ENCODE measurements at regions of chr11 and their contacts with region 1.

Region 1: GRCh38 chr11:57527056-57527631 is 3.4 kb downstream of the TIMM10 start:
- DNase-seq: peak; percentile 60 to 88 (median 78)
- H3K4me3 ChIP-seq: no peak overlapping the region
- H3K27ac ChIP-seq: no peak overlapping the region
- H3K4me1 ChIP-seq: peaks cover 8 to 18% of the 10 kb centered on the region in 2 donors
- H3K27me3 ChIP-seq: no peaks in the 10 kb centered on the region
- CTCF ChIP-seq: peak; percentile 89 to 96 (median 92)
- POLR2A ChIP-seq: no peak

Region 2: GRCh38 chr11:57345555-57346211 is 181.5 kb before region 1 on chr11:
- intact Hi-C with region 1: loop called in 1 of 2 experiments (anchors 10 kb)
- DNase-seq: peak; percentile 67 to 91 (median 80)
- H3K4me3 ChIP-seq: no peak overlapping the region
- H3K27ac ChIP-seq: no peak overlapping the region
- H3K4me1 ChIP-seq: no peaks in the 10 kb centered on the region
- H3K27me3 ChIP-seq: no peaks in the 10 kb centered on the region
- CTCF ChIP-seq: peak; percentile 50 to 85 (median 74)
- POLR2A ChIP-seq: no peak

Region 3: DNA sequence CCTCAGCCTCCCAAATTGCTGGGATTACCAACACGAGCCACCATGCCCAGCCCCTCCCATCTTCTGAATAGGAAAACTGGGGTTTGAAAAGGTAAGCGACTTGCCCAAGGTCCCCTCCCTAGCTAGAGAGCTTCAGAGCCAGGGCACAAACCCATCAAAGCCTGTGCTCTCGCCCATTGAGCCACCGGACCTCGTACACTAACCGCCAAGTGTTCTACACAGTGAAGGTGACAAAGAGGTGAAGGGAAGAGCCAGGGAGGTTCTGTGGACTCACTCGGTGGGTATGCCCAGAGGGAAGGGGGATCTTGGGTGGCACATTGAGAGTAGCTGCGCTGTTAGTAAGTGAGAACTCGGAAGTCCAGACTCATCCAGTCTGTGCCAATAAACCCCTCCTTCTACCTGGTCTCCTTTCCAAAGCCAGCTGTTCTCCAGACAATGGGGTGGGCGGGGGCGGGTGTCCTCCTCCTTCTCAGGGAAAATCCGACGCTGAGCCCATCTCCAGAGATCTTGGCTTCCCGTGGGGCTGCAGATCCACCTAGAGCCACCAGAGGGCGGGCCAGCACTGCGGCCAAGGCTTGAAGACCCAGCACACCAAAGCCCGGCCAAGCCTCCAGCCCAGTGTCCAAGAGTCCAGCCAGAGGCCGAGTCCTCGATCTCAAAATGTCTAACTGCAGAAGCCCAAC is 70.0 kb before region 1 on chr11:
- intact Hi-C with region 1: loop called in 1 of 2 experiments (anchors 5 kb)
- DNase-seq: peak; percentile 88 to 96 (median 92)
- H3K4me3 ChIP-seq: no peak overlapping the region
- H3K27ac ChIP-seq: no peak overlapping the region
- H3K4me1 ChIP-seq: peaks cover 19 to 32% of the 10 kb centered on the region in 2 donors
- H3K27me3 ChIP-seq: peaks cover 26% of the 10 kb centered on the region
- CTCF ChIP-seq: peak; percentile 91 to 100 (median 96)
- POLR2A ChIP-seq: no peak

Region 4: GRCh38 chr11:57493507-57494503 is 33.3 kb before region 1 on chr11:
- intact Hi-C with region 1: loop called (anchors 2 to 5 kb)
- DNase-seq: peak in 6 of 7 donors; percentile 50 to 71 (median 60)
- H3K4me3 ChIP-seq: no peak overlapping the region
- H3K27ac ChIP-seq: no peak overlapping the region
- H3K4me1 ChIP-seq: peaks cover under 1 to 3% of the 10 kb centered on the region in 2 donors
- H3K27me3 ChIP-seq: no peaks in the 10 kb centered on the region
- CTCF ChIP-seq: peak; percentile 72 to 89 (median 82)
- POLR2A ChIP-seq: no peak